ENCODE measurements at regions of chr12 and their contacts with region 1.

Region 1: GRCh38 chr12:110124184-110124995 is at the start of gene IFT81:
- DNase-seq: peak; percentile 94 to 99 (median 96)
- ATAC-seq: peak; percentile 89
- H3K4me3 ChIP-seq: peak within 1 kb of the TSS; percentile 98
- H3K4me3 Mint-ChIP-seq: peak within 1 kb of the TSS; percentile 92
- H3K27ac ChIP-seq: peak within 1 kb of the TSS; percentile 13 to 78
- H3K27ac Mint-ChIP-seq: peak within 1 kb of the TSS; percentile 63
- H3K4me1 ChIP-seq: peaks cover 12% of the 10 kb centered on the region
- H3K4me1 Mint-ChIP-seq: peaks cover 14% of the 10 kb centered on the region
- H3K27me3 ChIP-seq: no peaks in the 10 kb centered on the region
- H3K27me3 Mint-ChIP-seq: peaks cover 5% of the 10 kb centered on the region
- CTCF ChIP-seq: no peak
- total RNA-seq, gene IFT81: 0.41 to 1.1 TPM

Region 2: GRCh38 chr12:109573029-109573913 is 551.1 kb before region 1 on chr12 and contains the starts of genes MMAB and MVK:
- CTCF ChIA-PET with region 1: no interaction called
- POLR2A ChIA-PET with region 1: no interaction called
- intact Hi-C with region 1: loop called in 1 of 2 experiments (anchors 10 kb)
- DNase-seq: peak; percentile 95 to 100 (median 98)
- ATAC-seq: peak; percentile 91
- H3K4me3 ChIP-seq: peak within 1 kb of the TSS; percentile 78
- H3K4me3 Mint-ChIP-seq: peak within 1 kb of the TSS; percentile 99
- H3K27ac ChIP-seq: peak within 1 kb of the TSS; percentile 83 to 96
- H3K27ac Mint-ChIP-seq: peak within 1 kb of the TSS; percentile 95
- H3K4me1 ChIP-seq: peaks cover 19% of the 10 kb centered on the region
- H3K4me1 Mint-ChIP-seq: peaks cover 29% of the 10 kb centered on the region
- H3K27me3 ChIP-seq: no peaks in the 10 kb centered on the region
- H3K27me3 Mint-ChIP-seq: no peaks in the 10 kb centered on the region
- CTCF ChIP-seq: no peak
- total RNA-seq, gene MMAB: 8.6 to 9.2 TPM
- total RNA-seq, gene MVK: 8.2 to 8.4 TPM

Region 3: GRCh38 chr12:109899783-109900751 is 224.3 kb before region 1 on chr12 and contains the start of gene TCHP:
- CTCF ChIA-PET with region 1: no interaction called
- POLR2A ChIA-PET with region 1: no interaction called
- intact Hi-C with region 1: loop called in 1 of 2 experiments (anchors 2 kb)
- DNase-seq: peak; percentile 59 to 90 (median 69)
- ATAC-seq: peak; percentile 93
- H3K4me3 ChIP-seq: peak within 1 kb of the TSS; percentile 72
- H3K4me3 Mint-ChIP-seq: peak within 1 kb of the TSS; percentile 89
- H3K27ac ChIP-seq: peak within 1 kb of the TSS; percentile 55 to 64
- H3K27ac Mint-ChIP-seq: peak within 1 kb of the TSS; percentile 86
- H3K4me1 ChIP-seq: peaks cover 28% of the 10 kb centered on the region
- H3K4me1 Mint-ChIP-seq: peaks cover 25% of the 10 kb centered on the region
- H3K27me3 ChIP-seq: no peaks in the 10 kb centered on the region
- H3K27me3 Mint-ChIP-seq: no peaks in the 10 kb centered on the region
- CTCF ChIP-seq: no peak
- total RNA-seq, gene TCHP: 13.2 to 13.6 TPM

Region 4: GRCh38 chr12:110048242-110049027 is 76.0 kb before region 1 on chr12 and contains the start of gene C12orf76:
- CTCF ChIA-PET with region 1: no interaction called
- POLR2A ChIA-PET with region 1: no interaction called
- intact Hi-C with region 1: loop called in 1 of 2 experiments (anchors 2 kb)
- DNase-seq: peak; percentile 82 to 97 (median 90)
- ATAC-seq: peak; percentile 99
- H3K4me3 ChIP-seq: peak within 1 kb of the TSS; percentile 79
- H3K4me3 Mint-ChIP-seq: peak within 1 kb of the TSS; percentile 93
- H3K27ac ChIP-seq: peak within 1 kb of the TSS; percentile 76 to 87
- H3K27ac Mint-ChIP-seq: peak within 1 kb of the TSS; percentile 82
- H3K4me1 ChIP-seq: peaks cover 29% of the 10 kb centered on the region
- H3K4me1 Mint-ChIP-seq: peaks cover 29% of the 10 kb centered on the region
- H3K27me3 ChIP-seq: no peaks in the 10 kb centered on the region
- H3K27me3 Mint-ChIP-seq: no peaks in the 10 kb centered on the region
- CTCF ChIP-seq: no peak
- total RNA-seq, gene C12orf76: 9.8 to 12.6 TPM

Region 5: GRCh38 chr12:110403146-110403975 is 279.0 kb after region 1 on chr12 and contains the start of gene ANAPC7:
- CTCF ChIA-PET with region 1: no interaction called
- POLR2A ChIA-PET with region 1: no interaction called
- intact Hi-C with region 1: loop called in 1 of 2 experiments (anchors 10 kb)
- DNase-seq: peak; percentile 73 to 94 (median 84)
- ATAC-seq: peak; percentile 94
- H3K4me3 ChIP-seq: peak within 1 kb of the TSS; percentile 79
- H3K4me3 Mint-ChIP-seq: peak within 1 kb of the TSS; percentile 99
- H3K27ac ChIP-seq: peak within 1 kb of the TSS; percentile 86 to 91
- H3K27ac Mint-ChIP-seq: peak within 1 kb of the TSS; percentile 98
- H3K4me1 ChIP-seq: peaks cover 26% of the 10 kb centered on the region
- H3K4me1 Mint-ChIP-seq: peaks cover 41% of the 10 kb centered on the region
- H3K27me3 ChIP-seq: no peaks in the 10 kb centered on the region
- H3K27me3 Mint-ChIP-seq: no peaks in the 10 kb centered on the region
- CTCF ChIP-seq: no peak
- total RNA-seq, gene ANAPC7: 16.4 to 18.2 TPM

Region 6: DNA sequence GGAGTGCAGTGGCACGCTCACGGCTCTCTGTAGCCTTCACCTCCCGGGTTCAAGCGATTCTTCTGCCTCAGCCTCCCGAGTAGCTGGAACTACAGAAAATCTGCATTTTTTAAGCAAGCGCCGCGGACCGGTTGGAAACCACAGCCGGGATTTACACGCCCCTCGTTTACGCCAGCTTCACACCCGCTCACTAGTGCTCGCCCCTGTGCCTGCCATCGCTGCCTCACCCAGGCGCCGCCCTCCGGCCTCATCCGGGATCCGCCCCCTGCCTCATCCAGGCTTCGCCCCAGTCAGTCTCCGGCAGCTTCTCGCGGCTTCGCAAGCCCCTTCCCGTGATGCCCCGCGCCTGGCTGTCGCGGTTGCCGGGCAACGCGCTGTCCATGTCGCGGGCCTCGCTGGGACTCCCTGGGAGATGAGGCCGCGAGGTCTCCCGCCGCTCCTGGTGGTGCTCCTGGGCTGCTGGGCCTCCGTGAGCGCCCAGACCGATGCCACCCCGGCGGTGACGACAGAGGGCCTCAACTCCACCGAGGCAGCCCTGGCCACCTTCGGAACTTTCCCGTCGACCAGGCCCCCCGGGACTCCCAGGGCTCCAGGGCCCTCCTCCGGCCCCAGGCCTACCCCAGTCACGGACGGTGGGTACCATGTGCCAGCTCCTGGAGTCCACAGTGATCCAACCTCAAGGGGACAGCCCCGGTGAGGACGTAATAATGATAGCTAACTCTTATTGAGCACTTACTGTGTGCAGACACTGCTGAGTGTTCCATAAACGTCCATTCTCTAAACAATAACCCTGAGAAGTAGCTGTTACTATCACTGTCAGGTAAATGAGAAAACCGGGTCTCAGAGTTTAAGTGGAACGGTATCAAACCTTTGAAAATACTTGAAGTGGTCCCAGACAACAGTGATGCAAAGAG is 489.6 kb after region 1 on chr12 and contains the start of gene TCTN1:
- CTCF ChIA-PET with region 1: no interaction called
- POLR2A ChIA-PET with region 1: no interaction called
- intact Hi-C with region 1: loop called in 1 of 2 experiments (anchors 10 kb)
- DNase-seq: peak; percentile 91 to 98 (median 96)
- ATAC-seq: peak; percentile 99
- H3K4me3 ChIP-seq: peak within 1 kb of the TSS; percentile 73
- H3K4me3 Mint-ChIP-seq: peak within 1 kb of the TSS; percentile 89
- H3K27ac ChIP-seq: peak within 1 kb of the TSS; percentile 61 to 68
- H3K27ac Mint-ChIP-seq: peak within 1 kb of the TSS; percentile 83
- H3K4me1 ChIP-seq: peaks cover 17% of the 10 kb centered on the region
- H3K4me1 Mint-ChIP-seq: peaks cover 4% of the 10 kb centered on the region
- H3K27me3 ChIP-seq: no peaks in the 10 kb centered on the region
- H3K27me3 Mint-ChIP-seq: no peaks in the 10 kb centered on the region
- CTCF ChIP-seq: no peak
- total RNA-seq, gene TCTN1: 5.0 to 5.5 TPM

Measured in CD4-positive, alpha-beta T cell (primary cell).